ENCODE measurements at regions of chr12 and their contacts with region 1.

Region 1: DNA sequence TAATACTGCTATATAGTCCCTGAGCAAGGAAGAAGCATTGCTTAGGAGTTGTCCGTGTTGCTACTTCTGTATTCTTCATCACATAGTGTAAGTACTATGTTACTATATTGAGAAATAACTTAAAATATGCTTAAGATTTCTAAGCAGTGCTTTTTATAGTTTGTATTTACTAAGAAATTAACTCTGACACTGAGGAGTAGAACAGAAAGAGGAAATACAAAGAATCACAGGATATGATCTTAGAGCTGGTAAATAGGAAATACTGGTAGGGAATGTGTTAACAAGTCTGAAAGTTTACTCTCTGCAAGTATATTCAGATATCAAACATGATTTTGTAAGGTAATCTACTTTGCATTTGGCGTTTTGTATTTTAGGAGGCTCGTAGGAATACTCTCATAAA is 15.5 kb downstream of the XPOT start:
- DNase-seq: no peak
- ATAC-seq: no peak
- H3K4me3 ChIP-seq: no peak overlapping the region
- H3K27ac ChIP-seq: peak overlapping the region in 2 of 12 donors; percentile 6 to 28
- H3K4me1 ChIP-seq: no peaks in the 10 kb centered on the region
- H3K27me3 ChIP-seq: no peaks in the 10 kb centered on the region
- CTCF ChIP-seq: no peak
- POLR2A ChIP-seq: no peak

Region 2: GRCh38 chr12:64385468-64385867 is 34.2 kb before region 1 on chr12:
- intact Hi-C with region 1: no loop called
- DNase-seq: no peak
- ATAC-seq: no peak
- H3K4me3 ChIP-seq: no peak overlapping the region
- H3K27ac ChIP-seq: no peak overlapping the region
- H3K4me1 ChIP-seq: peaks cover 0 to 7% (median 2%) of the 10 kb centered on the region in 12 donors
- H3K27me3 ChIP-seq: peaks cover 0 to 17% (median 6%) of the 10 kb centered on the region in 9 donors
- CTCF ChIP-seq: no peak
- POLR2A ChIP-seq: no peak

Region 3: DNA sequence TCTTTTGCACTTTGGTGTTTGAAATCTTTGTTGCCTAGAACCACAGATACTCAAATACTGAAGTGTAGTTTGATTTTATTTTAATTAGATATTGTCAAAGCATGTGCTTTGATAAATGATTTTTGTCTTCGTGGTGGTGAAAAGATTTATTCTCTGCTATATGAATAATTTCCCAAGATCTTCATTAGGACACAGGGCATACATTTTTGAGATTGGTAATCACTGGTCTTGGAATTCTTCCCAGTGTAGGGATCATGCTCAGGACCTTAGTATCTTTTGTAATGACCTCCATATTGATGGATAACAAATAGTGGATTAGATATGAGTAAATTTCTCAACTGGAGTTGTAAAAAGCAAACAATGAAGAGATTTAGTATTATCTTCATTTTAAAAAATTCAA is 60.5 kb after region 1 on chr12:
- intact Hi-C with region 1: loop called in 2 of 10 experiments (anchors 5 to 10 kb)
- DNase-seq: no peak
- ATAC-seq: no peak
- H3K4me3 ChIP-seq: no peak overlapping the region
- H3K27ac ChIP-seq: no peak overlapping the region
- H3K4me1 ChIP-seq: peaks cover 0 to 4% (median 0%) of the 10 kb centered on the region in 12 donors
- H3K27me3 ChIP-seq: no peaks in the 10 kb centered on the region
- CTCF ChIP-seq: no peak
- POLR2A ChIP-seq: no peak

Region 4: GRCh38 chr12:64494998-64495729 is 75.5 kb after region 1 on chr12:
- intact Hi-C with region 1: loop called in 2 of 10 experiments (anchors 5 to 10 kb)
- DNase-seq: no peak
- ATAC-seq: no peak
- H3K4me3 ChIP-seq: no peak overlapping the region
- H3K27ac ChIP-seq: no peak overlapping the region
- H3K4me1 ChIP-seq: peaks cover 0 to 6% (median 0%) of the 10 kb centered on the region in 12 donors
- H3K27me3 ChIP-seq: no peaks in the 10 kb centered on the region
- CTCF ChIP-seq: no peak
- POLR2A ChIP-seq: no peak